Heart right ventricle (tissue), 16 donors: ENCODE measurements at regions of chr5 and their contacts with region 1.

Region 1: GRCh38 chr5:56838409-56839039 is 23.2 kb downstream of the MAP3K1 start:
- DNase-seq: no peak
- ATAC-seq: peak in 7 of 8 donors; percentile 43 to 75 (median 62)
- H3K4me3 ChIP-seq: no peak overlapping the region
- H3K27ac ChIP-seq: peak overlapping the region in 9 of 10 donors; percentile 6 to 66 (median 49)
- H3K4me1 ChIP-seq: peaks cover 0 to 96% (median 56%) of the 10 kb centered on the region in 9 donors
- H3K27me3 ChIP-seq: no peaks in the 10 kb centered on the region
- CTCF ChIP-seq: peak; percentile 26 to 82 (median 63)

Region 2: GRCh38 chr5:55936100-55936693 is 902.3 kb before region 1 on chr5:
- intact Hi-C with region 1: loop called in 1 of 10 experiments (anchors 10 kb)
- DNase-seq: peak; percentile 81 to 83
- ATAC-seq: peak; percentile 59 to 90 (median 84)
- H3K4me3 ChIP-seq: no peak overlapping the region
- H3K27ac ChIP-seq: no peak overlapping the region
- H3K4me1 ChIP-seq: no peaks in the 10 kb centered on the region
- H3K27me3 ChIP-seq: no peaks in the 10 kb centered on the region
- CTCF ChIP-seq: peak; percentile 73 to 97 (median 89)

Region 3: DNA sequence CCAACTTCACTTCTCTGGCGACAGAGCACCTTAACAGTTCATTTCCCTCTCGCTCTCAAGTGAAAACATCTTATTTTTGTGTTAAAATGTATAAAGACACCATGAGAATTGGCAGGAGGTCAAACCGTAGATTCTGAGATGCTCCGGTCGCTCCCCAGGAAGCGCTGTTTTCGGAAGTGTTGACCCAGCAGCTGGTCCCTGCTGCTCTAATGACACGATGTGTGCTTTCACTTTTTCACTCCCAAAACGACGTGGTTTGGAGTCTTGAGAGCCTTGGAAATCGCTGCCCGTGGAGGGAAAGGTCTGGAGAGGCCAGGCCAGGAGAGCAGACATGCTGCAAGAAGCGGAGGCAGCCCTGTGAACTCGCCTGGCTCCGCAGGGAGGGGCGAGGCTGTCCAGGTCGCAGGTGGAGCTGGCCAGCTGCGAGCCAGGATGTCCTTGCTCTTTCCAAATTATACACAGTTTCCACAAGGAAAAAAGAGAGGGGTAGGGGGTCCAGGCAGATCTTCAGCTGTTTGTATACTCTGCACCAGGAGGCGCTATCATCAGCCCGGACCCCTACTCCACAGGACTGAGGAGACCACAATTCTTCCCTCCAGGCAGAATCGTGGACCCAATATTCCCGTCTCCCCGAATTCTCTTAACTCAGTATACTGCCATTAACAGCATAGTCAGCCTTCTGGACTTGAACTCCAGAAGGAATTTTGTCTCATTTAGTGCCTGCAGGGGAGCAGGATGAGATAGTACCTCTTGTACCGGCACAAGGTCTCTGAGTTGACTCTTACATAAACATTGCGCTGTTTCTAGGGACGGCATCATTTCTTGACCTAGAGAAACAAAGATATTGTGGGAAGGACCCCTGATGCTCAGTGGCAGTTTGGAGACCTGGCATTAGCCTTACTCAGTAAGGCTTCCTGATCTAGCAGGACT is 356.8 kb before region 1 on chr5:
- intact Hi-C with region 1: loop called in 1 of 10 experiments (anchors 10 kb)
- DNase-seq: peak; percentile 45 to 80
- ATAC-seq: peak; percentile 48 to 75 (median 60)
- H3K4me3 ChIP-seq: peak overlapping the region; percentile 29 to 76 (median 66)
- H3K27ac ChIP-seq: peak overlapping the region; percentile 86 to 99 (median 96)
- H3K4me1 ChIP-seq: peaks cover 0 to 52% (median 16%) of the 10 kb centered on the region in 9 donors
- H3K27me3 ChIP-seq: no peaks in the 10 kb centered on the region
- CTCF ChIP-seq: peak in 7 of 9 donors; percentile 21 to 56 (median 36)

Region 4: DNA sequence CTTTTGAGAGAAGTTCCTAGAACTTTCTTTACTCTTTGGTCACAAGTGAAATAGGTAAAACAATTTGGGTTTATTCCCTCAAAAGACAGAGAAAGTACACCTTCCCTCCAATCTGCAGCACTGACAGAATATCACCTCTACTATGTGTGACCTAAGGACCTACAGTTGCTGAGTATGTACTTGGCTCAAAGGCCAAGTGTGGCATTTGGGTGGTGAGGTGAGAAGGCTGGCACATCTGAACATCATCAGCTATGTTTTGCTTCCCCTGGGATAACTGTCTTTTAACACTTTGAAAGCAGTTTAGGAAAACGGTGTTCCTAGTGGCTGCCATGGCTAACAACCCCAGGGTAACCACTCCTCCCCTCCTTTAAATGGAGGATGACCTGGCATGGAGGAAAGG is 95.8 kb after region 1 on chr5:
- intact Hi-C with region 1: no loop called
- DNase-seq: no peak
- ATAC-seq: peak in 2 of 8 donors; percentile 64 to 69
- H3K4me3 ChIP-seq: no peak overlapping the region
- H3K27ac ChIP-seq: peak overlapping the region in 2 of 10 donors; percentile 6 to 28
- H3K4me1 ChIP-seq: peaks cover 0 to 7% (median 0%) of the 10 kb centered on the region in 9 donors
- H3K27me3 ChIP-seq: no peaks in the 10 kb centered on the region
- CTCF ChIP-seq: no peak